Activated CD4-positive, alpha-beta T cell treated with anti-CD3 and anti-CD28 coated beads for 36 hours (primary cell): ENCODE measurements at regions of chr1 and their contacts with region 1.

Region 1: DNA sequence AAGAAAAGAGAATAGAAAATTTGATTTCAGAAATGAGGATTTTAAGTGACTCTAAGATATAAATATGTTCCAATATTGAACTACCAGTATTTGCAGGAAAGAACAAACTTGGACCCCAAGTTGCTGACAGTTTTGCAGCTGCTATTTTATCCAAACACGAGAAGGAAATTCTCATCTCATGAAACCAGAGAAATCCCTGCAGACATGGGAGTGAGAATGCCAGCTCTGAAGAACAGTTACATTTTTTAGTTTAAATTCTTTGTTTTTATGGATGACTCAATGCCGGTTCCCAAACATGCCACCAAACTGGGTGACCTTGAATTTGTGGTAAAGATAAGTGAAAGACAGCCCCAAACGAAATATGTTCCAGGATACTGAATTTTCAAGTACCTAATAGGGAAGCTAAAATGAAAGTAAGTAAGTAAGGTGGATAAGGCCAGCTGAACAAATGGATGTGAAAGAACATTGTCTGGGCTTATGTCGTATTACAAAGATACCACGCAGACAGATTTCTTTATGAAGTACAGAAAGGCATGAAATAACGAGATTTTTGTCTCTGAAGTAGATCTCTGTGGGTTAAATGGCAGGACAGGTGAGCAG is 19.9 kb downstream of the TLR5 start:
- DNase-seq: no peak
- ATAC-seq: no peak
- H3K4me3 Mint-ChIP-seq: peak overlapping the region; percentile 43
- H3K27ac Mint-ChIP-seq: no peak overlapping the region
- H3K4me1 Mint-ChIP-seq: peaks cover 6% of the 10 kb centered on the region
- H3K27me3 Mint-ChIP-seq: peaks cover 2% of the 10 kb centered on the region

Region 2: DNA sequence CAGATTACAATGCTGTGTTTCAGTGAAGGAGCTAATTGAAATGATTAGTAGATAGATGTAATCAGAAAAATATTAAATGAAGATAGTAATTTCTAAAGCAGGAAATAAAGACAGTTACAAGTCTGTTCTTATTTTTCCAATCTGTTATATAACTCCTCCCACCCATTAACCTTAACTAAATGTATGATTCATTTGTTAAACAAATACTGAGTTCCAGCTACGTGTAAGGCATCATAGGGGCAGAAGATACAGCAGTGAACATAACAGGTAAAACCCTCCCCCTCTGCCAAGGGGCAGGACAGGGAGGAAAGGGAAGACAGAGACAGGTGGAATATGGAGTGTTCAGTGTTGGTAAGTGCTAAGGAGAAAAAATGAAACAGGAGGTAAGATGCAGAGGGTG is 386.1 kb before region 1 on chr1 and contains the start of gene FAM177B:
- CTCF ChIA-PET with region 1: no interaction called
- POLR2A ChIA-PET with region 1: no interaction called
- intact Hi-C with region 1: loop called (anchors 2 to 5 kb)
- DNase-seq: no peak
- ATAC-seq: no peak
- H3K4me3 Mint-ChIP-seq: no peak within 1 kb of the TSS
- H3K27ac Mint-ChIP-seq: no peak within 1 kb of the TSS
- H3K4me1 Mint-ChIP-seq: peaks cover 8% of the 10 kb centered on the region
- H3K27me3 Mint-ChIP-seq: no peaks in the 10 kb centered on the region
- total RNA-seq, gene FAM177B: not detected

Region 3: GRCh38 chr1:222792744-222793143 is 330.4 kb before region 1 on chr1:
- CTCF ChIA-PET with region 1: interaction called, 12 read pairs
- POLR2A ChIA-PET with region 1: no interaction called
- intact Hi-C with region 1: loop called (anchors 1 kb)
- DNase-seq: no peak
- ATAC-seq: no peak
- H3K4me3 Mint-ChIP-seq: no peak overlapping the region
- H3K27ac Mint-ChIP-seq: no peak overlapping the region
- H3K4me1 Mint-ChIP-seq: peaks cover 7% of the 10 kb centered on the region
- H3K27me3 Mint-ChIP-seq: no peaks in the 10 kb centered on the region

Region 4: DNA sequence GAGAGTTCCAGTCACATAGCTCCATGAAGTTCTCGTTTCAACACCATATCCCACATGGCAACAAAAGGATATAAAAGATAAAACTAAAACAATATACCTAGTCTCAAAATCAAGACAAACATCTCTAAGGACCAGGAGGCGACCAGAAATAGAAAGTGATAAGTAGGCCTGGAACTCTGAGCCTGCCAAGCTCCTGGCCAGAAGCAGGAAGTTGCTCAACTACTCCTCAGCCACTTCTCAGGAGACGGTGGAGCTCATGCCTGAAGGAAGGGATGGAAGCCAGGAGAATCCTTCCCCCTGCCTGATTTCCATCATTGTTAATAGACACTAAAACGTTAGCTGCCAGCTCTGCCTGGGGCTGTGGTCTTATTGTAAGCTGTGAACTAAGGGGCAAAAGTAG is 213.5 kb before region 1 on chr1:
- CTCF ChIA-PET with region 1: no interaction called
- POLR2A ChIA-PET with region 1: no interaction called
- intact Hi-C with region 1: no loop called
- DNase-seq: no peak
- ATAC-seq: no peak
- H3K4me3 Mint-ChIP-seq: no peak overlapping the region
- H3K27ac Mint-ChIP-seq: no peak overlapping the region
- H3K4me1 Mint-ChIP-seq: no peaks in the 10 kb centered on the region
- H3K27me3 Mint-ChIP-seq: no peaks in the 10 kb centered on the region

Region 5: DNA sequence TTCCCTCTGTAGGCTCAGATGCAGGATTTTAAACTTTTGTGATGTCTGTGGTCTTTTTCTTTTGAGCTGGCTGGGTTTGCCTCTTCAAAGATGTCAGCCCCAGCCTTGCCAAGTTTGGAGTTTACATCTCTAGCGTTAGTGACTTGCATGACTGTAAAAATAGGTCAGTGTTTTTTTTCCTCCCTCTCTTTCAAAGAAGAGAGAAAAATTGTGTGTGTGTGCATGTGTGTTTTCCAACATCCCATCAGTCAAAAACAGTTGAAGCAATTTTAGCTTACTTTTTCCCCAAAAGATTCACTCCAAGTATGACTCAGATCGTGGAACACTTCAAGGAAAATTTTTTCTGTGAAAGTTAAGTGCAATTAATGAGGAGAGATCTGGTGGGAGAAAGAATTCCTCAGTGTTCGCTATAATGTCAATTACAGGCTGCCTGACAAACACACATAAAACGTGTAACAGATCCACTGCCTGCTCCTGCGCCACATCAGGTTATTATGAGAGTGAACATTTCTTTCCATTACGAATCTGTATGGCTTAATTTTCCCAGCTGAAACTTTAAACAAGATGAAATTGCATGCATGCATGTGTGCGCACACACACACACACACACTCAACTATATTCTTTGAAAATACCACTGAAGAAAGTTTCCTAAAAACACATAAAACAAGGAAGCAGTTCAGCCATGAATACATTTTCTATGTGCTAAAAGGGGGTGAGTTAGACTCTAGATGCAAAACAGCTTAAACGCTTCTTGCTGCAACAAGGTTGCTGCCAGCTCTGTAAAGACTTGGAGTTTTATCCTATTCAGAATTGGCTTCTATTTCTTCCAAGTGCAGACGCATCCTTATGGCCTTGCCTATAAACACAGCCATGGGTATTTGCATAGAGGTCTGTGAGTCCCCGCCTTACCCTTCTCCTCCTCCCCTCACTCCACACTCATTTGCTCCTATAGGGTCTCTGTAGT is 35.5 kb before region 1 on chr1:
- CTCF ChIA-PET with region 1: interaction called, 32 read pairs
- POLR2A ChIA-PET with region 1: no interaction called
- intact Hi-C with region 1: no loop called
- DNase-seq: no peak
- ATAC-seq: no peak
- H3K4me3 Mint-ChIP-seq: no peak overlapping the region
- H3K27ac Mint-ChIP-seq: no peak overlapping the region
- H3K4me1 Mint-ChIP-seq: peaks cover 10% of the 10 kb centered on the region
- H3K27me3 Mint-ChIP-seq: no peaks in the 10 kb centered on the region

Region 6: GRCh38 chr1:223106856-223107255 is 16.3 kb before region 1 on chr1:
- CTCF ChIA-PET with region 1: interaction called, 10 read pairs
- POLR2A ChIA-PET with region 1: no interaction called
- intact Hi-C with region 1: no loop called
- DNase-seq: no peak
- ATAC-seq: no peak
- H3K4me3 Mint-ChIP-seq: no peak overlapping the region
- H3K27ac Mint-ChIP-seq: no peak overlapping the region
- H3K4me1 Mint-ChIP-seq: peaks cover 16% of the 10 kb centered on the region
- H3K27me3 Mint-ChIP-seq: peaks cover 2% of the 10 kb centered on the region

Region 7: GRCh38 chr1:223142795-223143536 is 19.9 kb after region 1 on chr1 and contains the start of gene TLR5:
- CTCF ChIA-PET with region 1: interaction called, 22 read pairs
- POLR2A ChIA-PET with region 1: no interaction called
- intact Hi-C with region 1: no loop called
- DNase-seq: peak; percentile 93
- ATAC-seq: peak; percentile 89
- H3K4me3 Mint-ChIP-seq: peak within 1 kb of the TSS; percentile 69
- H3K27ac Mint-ChIP-seq: peak within 1 kb of the TSS; percentile 79
- H3K4me1 Mint-ChIP-seq: peaks cover 30% of the 10 kb centered on the region
- H3K27me3 Mint-ChIP-seq: peaks cover 2% of the 10 kb centered on the region
- total RNA-seq, gene TLR5: 0.21 to 0.56 TPM